ENCODE measurements at regions of chr20 and their contacts with region 1.

Region 1: DNA sequence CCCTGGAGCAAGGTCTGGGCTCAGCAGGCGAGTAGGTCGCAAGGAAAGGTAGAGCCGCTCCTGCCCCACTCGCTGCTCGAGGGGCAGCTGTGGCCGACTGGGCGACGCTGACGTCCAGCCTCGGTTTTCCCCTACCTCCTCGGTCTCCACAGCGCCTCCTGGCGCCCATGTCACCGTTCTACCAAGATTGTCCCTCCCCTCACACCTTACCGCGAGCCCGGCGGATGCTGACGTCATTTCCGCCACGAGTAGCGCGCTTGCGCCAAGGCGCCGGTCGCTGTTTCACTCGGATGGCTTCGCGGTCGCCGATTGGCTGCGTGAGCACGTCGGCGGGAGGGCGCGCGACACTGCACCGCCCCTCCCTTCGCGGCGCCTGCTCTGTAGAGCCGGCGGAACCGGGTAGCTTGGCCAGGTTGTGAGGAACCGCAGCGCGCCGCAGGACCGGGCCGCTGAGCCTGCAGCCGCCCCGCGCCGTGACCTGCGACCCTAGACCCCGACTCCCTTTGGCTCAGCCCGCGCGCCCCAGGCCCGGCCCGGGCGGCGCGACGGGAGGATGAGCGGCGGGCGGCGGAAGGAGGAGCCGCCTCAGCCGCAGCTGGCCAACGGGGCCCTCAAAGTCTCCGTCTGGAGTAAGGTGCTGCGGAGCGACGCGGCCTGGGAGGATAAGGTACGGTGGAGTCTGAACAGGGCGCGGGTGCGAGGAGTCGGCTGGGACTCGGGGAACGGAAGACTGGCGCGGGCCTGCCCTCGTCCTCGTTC is at the start of gene RAB5IF:
- DNase-seq: peak; percentile 98
- H3K4me3 ChIP-seq: peak within 1 kb of the TSS; percentile 69 to 95 (median 93)
- H3K27ac ChIP-seq: peak within 1 kb of the TSS; percentile 64
- H3K4me1 ChIP-seq: peaks cover 16% of the 10 kb centered on the region
- H3K27me3 ChIP-seq: no peaks in the 10 kb centered on the region
- CTCF ChIP-seq: peak; percentile 81 to 94
- total RNA-seq, gene RAB5IF: 61.8 to 115 TPM

Region 2: GRCh38 chr20:36214684-36215256 is 390.8 kb before region 1 on chr20:
- CTCF ChIA-PET with region 1: no interaction called
- dilution Hi-C with region 1: no loop called
- in situ Hi-C with region 1: no loop called
- intact Hi-C with region 1: loop called (anchors 10 kb)
- DNase-seq: peak; percentile 18
- H3K4me3 ChIP-seq: no peak overlapping the region
- H3K27ac ChIP-seq: no peak overlapping the region
- H3K4me1 ChIP-seq: no peaks in the 10 kb centered on the region
- H3K27me3 ChIP-seq: no peaks in the 10 kb centered on the region
- CTCF ChIP-seq: peak; percentile 72

Region 3: GRCh38 chr20:36235892-36236785 is 369.4 kb before region 1 on chr20 and contains the start of gene AAR2:
- CTCF ChIA-PET with region 1: no interaction called
- dilution Hi-C with region 1: no loop called
- in situ Hi-C with region 1: no loop called
- intact Hi-C with region 1: no loop called
- DNase-seq: peak; percentile 76
- H3K4me3 ChIP-seq: peak within 1 kb of the TSS; percentile 76 to 99 (median 89)
- H3K27ac ChIP-seq: peak within 1 kb of the TSS; percentile 83
- H3K4me1 ChIP-seq: peaks cover 12% of the 10 kb centered on the region
- H3K27me3 ChIP-seq: no peaks in the 10 kb centered on the region
- CTCF ChIP-seq: no peak
- total RNA-seq, gene AAR2: 20.9 to 29.3 TPM

Region 4: DNA sequence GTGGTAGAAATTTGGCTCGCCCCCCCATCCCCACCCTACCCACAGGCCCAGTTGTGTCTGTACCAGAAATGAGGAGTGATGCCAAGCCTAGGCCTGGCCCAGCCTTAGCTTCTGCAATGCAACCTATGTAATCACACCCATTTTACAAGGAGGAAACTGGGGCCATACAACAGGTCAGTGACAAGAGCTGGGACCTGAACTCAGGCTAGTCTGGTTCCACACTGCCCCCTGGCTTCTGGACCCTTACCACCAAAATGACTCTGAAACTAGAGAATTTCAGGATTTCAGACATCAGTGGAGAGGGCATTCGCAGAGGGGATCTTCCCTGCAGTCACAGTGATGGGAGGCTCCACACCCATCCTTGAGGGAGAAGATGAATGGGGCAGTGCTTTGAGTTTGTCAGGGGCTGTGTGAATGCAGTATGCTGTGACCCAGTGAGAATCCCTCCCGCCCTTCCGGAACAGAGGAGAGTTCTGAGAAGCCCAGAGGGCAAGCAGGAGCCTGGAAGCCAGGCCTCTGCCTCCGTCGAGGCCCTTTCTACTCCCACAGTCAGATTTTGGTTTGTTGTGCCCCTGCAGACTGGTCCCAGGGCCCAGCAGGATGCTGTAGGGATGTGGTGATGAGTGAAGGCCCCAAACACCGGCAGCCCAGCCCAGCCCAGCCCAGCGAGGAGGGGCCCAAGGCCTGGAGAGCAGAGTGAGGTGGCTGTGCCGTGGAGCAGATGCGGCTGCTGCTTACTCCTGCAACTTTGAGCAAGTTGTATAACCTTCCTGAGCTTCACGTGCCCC is 112.4 kb before region 1 on chr20:
- CTCF ChIA-PET with region 1: no interaction called
- dilution Hi-C with region 1: loop called (anchors 10 kb)
- in situ Hi-C with region 1: no loop called
- intact Hi-C with region 1: no loop called
- DNase-seq: no peak
- H3K4me3 ChIP-seq: no peak overlapping the region
- H3K27ac ChIP-seq: no peak overlapping the region
- H3K4me1 ChIP-seq: peaks cover 41% of the 10 kb centered on the region
- H3K27me3 ChIP-seq: no peaks in the 10 kb centered on the region
- CTCF ChIP-seq: peak in 1 of 2 donors; percentile 42

Region 5: GRCh38 chr20:36550797-36551299 is 54.7 kb before region 1 on chr20:
- CTCF ChIA-PET with region 1: no interaction called
- dilution Hi-C with region 1: no loop called
- in situ Hi-C with region 1: no loop called
- intact Hi-C with region 1: loop called (anchors 1 kb)
- DNase-seq: peak; percentile 26
- H3K4me3 ChIP-seq: no peak overlapping the region
- H3K27ac ChIP-seq: no peak overlapping the region
- H3K4me1 ChIP-seq: no peaks in the 10 kb centered on the region
- H3K27me3 ChIP-seq: no peaks in the 10 kb centered on the region
- CTCF ChIP-seq: no peak

Region 6: GRCh38 chr20:36644032-36644705 is 38.6 kb after region 1 on chr20:
- CTCF ChIA-PET with region 1: no interaction called
- dilution Hi-C with region 1: loop called (anchors 5 kb)
- in situ Hi-C with region 1: no loop called
- intact Hi-C with region 1: no loop called
- DNase-seq: no peak
- H3K4me3 ChIP-seq: no peak overlapping the region
- H3K27ac ChIP-seq: no peak overlapping the region
- H3K4me1 ChIP-seq: peaks cover 10% of the 10 kb centered on the region
- H3K27me3 ChIP-seq: no peaks in the 10 kb centered on the region
- CTCF ChIP-seq: no peak

Region 7: DNA sequence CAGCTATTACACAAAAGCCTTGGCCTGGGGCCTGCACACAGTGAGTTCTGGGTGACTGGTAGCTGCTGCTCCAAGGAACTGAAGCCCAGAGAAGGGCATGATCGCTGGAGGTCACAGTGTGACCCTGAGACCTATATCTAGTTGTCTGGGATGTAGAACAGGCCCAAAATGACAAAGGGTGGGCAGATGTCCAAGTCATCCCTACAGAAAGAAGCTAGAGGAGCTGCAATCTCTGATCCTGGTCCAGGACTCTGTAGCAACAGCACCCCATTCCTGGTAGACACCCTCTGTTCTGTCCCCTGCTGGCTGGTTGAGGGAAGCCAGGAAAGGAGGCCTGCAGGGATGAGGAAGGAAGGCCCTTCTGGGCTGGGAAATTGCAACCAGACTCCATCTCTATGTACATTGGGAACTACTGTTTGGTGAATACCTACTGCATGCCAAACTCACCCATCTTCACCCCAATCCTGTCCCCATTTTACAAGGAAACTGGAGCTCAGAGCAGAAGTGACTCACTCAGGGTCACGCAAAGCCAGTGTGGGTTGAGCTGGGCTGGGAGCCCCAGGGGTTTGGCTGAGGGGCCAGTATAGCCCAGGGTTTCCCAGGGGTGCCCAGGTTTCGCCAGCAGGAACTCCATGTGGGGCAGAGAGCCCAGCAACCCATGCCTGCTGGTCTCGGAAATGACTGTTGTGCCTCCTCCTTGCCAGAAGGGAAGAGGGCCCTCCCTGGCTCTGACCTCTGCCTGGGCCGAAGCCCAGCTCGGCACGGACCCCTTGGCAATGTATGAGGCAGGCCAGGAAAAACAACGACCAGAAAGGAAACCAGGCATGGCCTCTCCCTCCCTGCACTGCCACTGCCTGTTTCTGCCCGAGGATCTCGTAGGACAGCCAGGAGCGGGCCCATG is 225.5 kb after region 1 on chr20:
- CTCF ChIA-PET with region 1: no interaction called
- dilution Hi-C with region 1: no loop called
- in situ Hi-C with region 1: no loop called
- intact Hi-C with region 1: no loop called
- DNase-seq: no peak
- H3K4me3 ChIP-seq: no peak overlapping the region
- H3K27ac ChIP-seq: peak overlapping the region; percentile 3
- H3K4me1 ChIP-seq: peaks cover 23% of the 10 kb centered on the region
- H3K27me3 ChIP-seq: no peaks in the 10 kb centered on the region
- CTCF ChIP-seq: peak; percentile 36 to 48

Region 8: GRCh38 chr20:36886859-36887751 is 281.5 kb after region 1 on chr20:
- CTCF ChIA-PET with region 1: no interaction called
- dilution Hi-C with region 1: no loop called
- in situ Hi-C with region 1: loop called in 1 of 2 experiments (anchors 25 kb)
- intact Hi-C with region 1: no loop called
- DNase-seq: peak; percentile 73
- H3K4me3 ChIP-seq: no peak overlapping the region
- H3K27ac ChIP-seq: no peak overlapping the region
- H3K4me1 ChIP-seq: no peaks in the 10 kb centered on the region
- H3K27me3 ChIP-seq: no peaks in the 10 kb centered on the region
- CTCF ChIP-seq: peak; percentile 98 to 99